ENCODE measurements at regions of chr2 and their contacts with region 1.

Region 1: DNA sequence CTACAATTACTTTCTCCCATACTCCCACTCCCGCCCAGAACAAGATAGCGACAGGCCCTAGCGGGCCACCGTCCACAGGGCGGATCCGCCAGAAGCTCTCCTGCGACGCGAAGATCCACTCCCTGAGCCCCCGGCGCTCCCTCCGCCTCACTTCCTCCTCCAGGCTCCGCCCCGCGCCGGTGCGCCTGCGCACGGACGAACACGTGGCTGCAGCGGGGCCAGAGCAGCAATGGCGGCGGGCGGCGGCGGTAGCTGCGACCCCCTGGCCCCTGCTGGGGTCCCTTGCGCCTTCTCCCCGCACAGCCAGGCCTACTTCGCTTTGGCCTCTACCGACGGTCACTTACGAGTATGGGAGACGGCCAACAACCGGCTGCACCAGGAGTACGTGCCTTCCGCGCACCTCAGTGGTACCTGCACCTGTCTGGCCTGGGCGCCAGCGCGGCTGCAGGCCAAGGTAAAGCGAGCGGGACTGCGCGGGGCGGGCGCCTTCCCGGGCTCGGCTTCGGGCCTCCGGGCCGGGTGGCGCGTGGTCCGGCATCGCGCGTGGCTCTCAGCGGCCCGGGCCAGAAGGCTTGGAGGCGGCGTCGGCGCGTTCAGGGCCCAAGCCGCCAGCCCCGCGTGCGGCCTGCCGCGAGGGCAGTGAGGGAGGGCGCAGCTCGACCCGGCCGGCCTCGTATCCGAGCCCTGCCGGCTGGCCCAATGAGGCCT is at the start of gene WDR43:
- DNase-seq: peak; percentile 97 to 100
- ATAC-seq: peak; percentile 95 to 98
- H3K4me3 ChIP-seq: peak within 1 kb of the TSS; percentile 82
- H3K27ac ChIP-seq: peak within 1 kb of the TSS; percentile 89 to 97
- H3K4me1 ChIP-seq: peaks cover 35% of the 10 kb centered on the region
- CTCF ChIP-seq: no peak
- EP300 ChIP-seq: no peak; a peak in 1 of 5 replicates
- POLR2A ChIP-seq: peak; percentile 87
- RAD21 ChIP-seq: no peak
- polyA plus RNA-seq, gene WDR43: 208 and 256 TPM in 2 replicates

Region 2: DNA sequence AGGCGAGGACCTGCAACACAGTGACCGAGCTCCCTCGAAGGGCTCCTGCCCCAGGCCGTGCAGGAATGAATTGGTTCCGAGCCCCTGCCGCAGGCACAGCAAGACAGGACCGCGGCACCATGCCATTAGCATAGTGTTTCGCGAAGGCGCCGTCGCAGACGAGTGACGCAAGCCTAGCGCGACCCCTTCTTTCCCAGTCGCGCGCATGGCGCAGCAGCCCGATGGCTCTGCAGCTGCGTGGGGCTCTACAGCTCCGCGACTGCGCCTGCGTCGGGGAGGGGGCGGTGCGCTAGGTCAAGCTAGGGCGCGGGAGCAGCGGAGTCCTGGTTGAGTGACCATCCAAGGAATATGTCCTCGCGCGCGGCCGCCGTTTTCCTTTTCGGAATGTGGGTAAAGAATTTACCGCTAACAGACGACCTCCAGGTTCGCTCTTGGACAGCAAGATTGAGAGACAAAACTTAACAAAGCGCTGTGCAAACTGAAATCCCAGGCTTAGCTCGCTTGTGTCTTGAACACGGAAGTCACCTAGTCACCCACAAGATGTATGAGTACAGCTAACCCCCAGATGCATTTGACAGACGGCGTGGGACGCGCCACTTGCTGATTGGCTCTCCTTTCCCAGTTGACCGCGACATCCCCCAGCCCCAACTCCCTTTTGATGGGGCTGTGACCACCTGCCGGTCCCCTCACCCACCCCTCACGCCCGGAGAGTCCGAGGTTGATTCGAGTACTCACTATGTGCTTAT is 24.3 kb before region 1 on chr2 and contains the start of gene TRMT61B:
- CTCF ChIA-PET with region 1: no interaction called
- POLR2A ChIA-PET with region 1: interaction called, 32 read pairs
- DNase-seq: peak; percentile 97 to 98
- ATAC-seq: peak; percentile 99 to 100
- H3K4me3 ChIP-seq: peak within 1 kb of the TSS; percentile 70
- H3K27ac ChIP-seq: peak within 1 kb of the TSS; percentile 75 to 86
- H3K4me1 ChIP-seq: peaks cover 19% of the 10 kb centered on the region
- CTCF ChIP-seq: no peak
- EP300 ChIP-seq: no peak
- POLR2A ChIP-seq: peak; percentile 81
- RAD21 ChIP-seq: no peak; a peak in 1 of 5 replicates
- polyA plus RNA-seq, gene TRMT61B: 24.9 and 38.6 TPM in 2 replicates